ENCODE measurements at regions of chr17 and their contacts with region 1.

Region 1: DNA sequence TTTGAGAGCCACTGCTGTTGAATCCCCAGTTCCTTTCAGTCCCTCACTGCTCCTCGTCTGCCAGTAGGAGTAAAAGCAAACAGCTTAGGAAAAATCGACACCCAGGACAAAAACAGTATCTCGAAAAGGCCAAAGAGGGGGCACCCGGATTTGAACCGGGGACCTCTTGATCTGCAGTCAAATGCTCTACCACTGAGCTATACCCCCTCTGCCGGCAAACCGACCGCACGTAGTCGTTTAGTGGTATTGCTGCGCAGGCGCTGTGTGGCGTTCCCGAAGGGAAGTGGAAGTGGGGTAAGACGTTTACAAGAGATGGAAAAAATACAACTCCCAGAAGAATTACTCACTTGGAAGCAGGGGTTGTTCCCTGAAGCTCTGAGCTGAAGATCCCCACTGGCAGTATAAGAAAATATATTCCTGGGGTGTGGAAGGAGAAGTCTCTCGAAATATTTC is 2.2 kb upstream of the PLXDC1 start:
- DNase-seq: peak; percentile 94
- ATAC-seq: peak; percentile 59
- H3K4me3 ChIP-seq: peak overlapping the region; percentile 62 to 93 (median 82)
- H3K4me3 Mint-ChIP-seq: peak overlapping the region; percentile 94
- H3K27ac ChIP-seq: peak overlapping the region; percentile 53 to 62
- H3K27ac Mint-ChIP-seq: peak overlapping the region; percentile 99
- H3K4me1 ChIP-seq: peaks cover 25 to 34% of the 10 kb centered on the region in 2 donors
- H3K4me1 Mint-ChIP-seq: peaks cover 30% of the 10 kb centered on the region
- H3K27me3 ChIP-seq: peaks cover 0 to 34% (median 17%) of the 10 kb centered on the region in 4 experiments
- H3K27me3 Mint-ChIP-seq: peaks cover 30% of the 10 kb centered on the region
- CTCF ChIP-seq: no peak

Region 2: GRCh38 chr17:38853292-38854219 is 300.1 kb before region 1 on chr17 and contains the start of gene RPL23:
- CTCF ChIA-PET with region 1: no interaction called
- POLR2A ChIA-PET with region 1: no interaction called
- intact Hi-C with region 1: loop called (anchors 5 kb)
- DNase-seq: peak; percentile 98
- ATAC-seq: peak; percentile 91
- H3K4me3 ChIP-seq: peak within 1 kb of the TSS; percentile 70 to 99 (median 73)
- H3K4me3 Mint-ChIP-seq: peak within 1 kb of the TSS; percentile 98
- H3K27ac ChIP-seq: peak within 1 kb of the TSS; percentile 92
- H3K27ac Mint-ChIP-seq: peak within 1 kb of the TSS; percentile 100
- H3K4me1 ChIP-seq: peaks cover 23 to 27% of the 10 kb centered on the region in 2 donors
- H3K4me1 Mint-ChIP-seq: peaks cover 41% of the 10 kb centered on the region
- H3K27me3 ChIP-seq: no peaks in the 10 kb centered on the region
- H3K27me3 Mint-ChIP-seq: no peaks in the 10 kb centered on the region
- CTCF ChIP-seq: no peak
- total RNA-seq, gene RPL23: 1,692 and 1,753 TPM in 2 replicates

Region 3: DNA sequence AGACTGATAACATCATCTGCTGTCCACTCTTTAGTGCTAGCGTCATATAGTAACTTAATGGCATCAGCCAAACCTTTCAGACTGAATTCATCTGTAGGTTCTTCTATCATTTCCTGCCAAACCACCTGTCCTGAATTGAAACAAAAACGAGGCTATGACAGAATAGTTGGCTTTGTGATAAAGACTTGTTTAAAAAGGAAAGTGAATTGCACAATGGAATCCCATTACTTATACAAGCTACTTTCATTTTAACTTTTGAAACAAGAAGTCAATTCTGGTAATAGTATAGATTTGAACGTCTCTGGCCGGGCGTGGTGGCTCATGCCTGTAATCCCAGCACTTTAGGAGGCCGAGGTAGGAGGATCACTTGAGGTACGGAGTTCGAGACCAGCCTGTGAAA is 210.0 kb before region 1 on chr17:
- CTCF ChIA-PET with region 1: no interaction called
- POLR2A ChIA-PET with region 1: interaction called, 11 read pairs
- intact Hi-C with region 1: no loop called
- DNase-seq: no peak
- ATAC-seq: no peak
- H3K4me3 ChIP-seq: no peak overlapping the region
- H3K4me3 Mint-ChIP-seq: no peak overlapping the region
- H3K27ac ChIP-seq: no peak overlapping the region
- H3K27ac Mint-ChIP-seq: no peak overlapping the region
- H3K4me1 ChIP-seq: no peaks in the 10 kb centered on the region
- H3K4me1 Mint-ChIP-seq: peaks cover 8% of the 10 kb centered on the region
- H3K27me3 ChIP-seq: no peaks in the 10 kb centered on the region
- H3K27me3 Mint-ChIP-seq: peaks cover under 1% of the 10 kb centered on the region
- CTCF ChIP-seq: no peak

Region 4: GRCh38 chr17:39069114-39069756 is 84.4 kb before region 1 on chr17:
- CTCF ChIA-PET with region 1: interaction called, 15 read pairs
- POLR2A ChIA-PET with region 1: interaction called, 6 read pairs
- intact Hi-C with region 1: loop called (anchors 1 kb)
- DNase-seq: peak; percentile 65
- ATAC-seq: peak; percentile 71
- H3K4me3 ChIP-seq: no peak overlapping the region
- H3K4me3 Mint-ChIP-seq: no peak overlapping the region
- H3K27ac ChIP-seq: no peak overlapping the region
- H3K27ac Mint-ChIP-seq: no peak overlapping the region
- H3K4me1 ChIP-seq: peaks cover 0 to 4% of the 10 kb centered on the region in 2 donors
- H3K4me1 Mint-ChIP-seq: no peaks in the 10 kb centered on the region
- H3K27me3 ChIP-seq: peaks cover 0 to 14% (median 4%) of the 10 kb centered on the region in 4 experiments
- H3K27me3 Mint-ChIP-seq: peaks cover 4% of the 10 kb centered on the region
- CTCF ChIP-seq: peak; percentile 62

Region 5: GRCh38 chr17:39099663-39100286 is 53.9 kb before region 1 on chr17:
- CTCF ChIA-PET with region 1: no interaction called
- POLR2A ChIA-PET with region 1: no interaction called
- intact Hi-C with region 1: no loop called
- DNase-seq: no peak
- ATAC-seq: no peak
- H3K4me3 ChIP-seq: no peak overlapping the region
- H3K4me3 Mint-ChIP-seq: no peak overlapping the region
- H3K27ac ChIP-seq: no peak overlapping the region
- H3K27ac Mint-ChIP-seq: no peak overlapping the region
- H3K4me1 ChIP-seq: peaks cover 33 to 44% of the 10 kb centered on the region in 2 donors
- H3K4me1 Mint-ChIP-seq: peaks cover 38% of the 10 kb centered on the region
- H3K27me3 ChIP-seq: peaks cover 0 to 19% (median 9%) of the 10 kb centered on the region in 4 experiments
- H3K27me3 Mint-ChIP-seq: peaks cover 22% of the 10 kb centered on the region
- CTCF ChIP-seq: no peak

Region 6: GRCh38 chr17:39199820-39200069 is 46.1 kb after region 1 on chr17:
- CTCF ChIA-PET with region 1: interaction called, 16 read pairs
- POLR2A ChIA-PET with region 1: interaction called, 12 read pairs
- intact Hi-C with region 1: loop called (anchors 5 kb)
- DNase-seq: no peak
- ATAC-seq: peak; percentile 62
- H3K4me3 ChIP-seq: peak overlapping the region; percentile 78 to 100 (median 95)
- H3K4me3 Mint-ChIP-seq: peak overlapping the region; percentile 89
- H3K27ac ChIP-seq: peak overlapping the region; percentile 89 to 99
- H3K27ac Mint-ChIP-seq: peak overlapping the region; percentile 100
- H3K4me1 ChIP-seq: peaks cover 37 to 61% of the 10 kb centered on the region in 2 donors
- H3K4me1 Mint-ChIP-seq: peaks cover 57% of the 10 kb centered on the region
- H3K27me3 ChIP-seq: no peaks in the 10 kb centered on the region
- H3K27me3 Mint-ChIP-seq: no peaks in the 10 kb centered on the region
- CTCF ChIP-seq: no peak

Region 7: DNA sequence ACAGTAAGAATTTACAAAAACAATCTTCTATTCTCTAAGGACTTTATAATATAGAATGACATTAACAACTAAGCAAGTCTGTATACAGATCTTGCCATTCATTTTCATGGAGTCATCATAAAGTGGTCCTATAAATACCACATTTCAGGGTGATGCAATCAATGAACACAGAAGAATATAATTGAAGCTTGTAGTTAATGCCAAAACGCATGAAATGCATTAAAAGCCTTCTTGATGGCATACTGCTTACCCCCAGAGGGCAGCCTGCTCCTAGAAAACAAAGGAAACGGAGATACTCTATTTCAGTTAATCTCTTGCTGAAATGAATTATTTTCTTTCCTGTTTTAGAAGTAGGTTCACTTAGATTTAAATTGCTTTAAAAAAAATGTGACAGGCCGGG is 117.3 kb after region 1 on chr17:
- CTCF ChIA-PET with region 1: no interaction called
- POLR2A ChIA-PET with region 1: no interaction called
- intact Hi-C with region 1: no loop called
- DNase-seq: peak; percentile 13
- ATAC-seq: no peak
- H3K4me3 ChIP-seq: no peak overlapping the region
- H3K4me3 Mint-ChIP-seq: no peak overlapping the region
- H3K27ac ChIP-seq: no peak overlapping the region
- H3K27ac Mint-ChIP-seq: no peak overlapping the region
- H3K4me1 ChIP-seq: no peaks in the 10 kb centered on the region
- H3K4me1 Mint-ChIP-seq: no peaks in the 10 kb centered on the region
- H3K27me3 ChIP-seq: no peaks in the 10 kb centered on the region
- H3K27me3 Mint-ChIP-seq: no peaks in the 10 kb centered on the region
- CTCF ChIP-seq: peak; percentile 21

Measured in B cell (primary cell).